ENCODE measurements at regions of chr9 and their contacts with region 1.

Region 1: DNA sequence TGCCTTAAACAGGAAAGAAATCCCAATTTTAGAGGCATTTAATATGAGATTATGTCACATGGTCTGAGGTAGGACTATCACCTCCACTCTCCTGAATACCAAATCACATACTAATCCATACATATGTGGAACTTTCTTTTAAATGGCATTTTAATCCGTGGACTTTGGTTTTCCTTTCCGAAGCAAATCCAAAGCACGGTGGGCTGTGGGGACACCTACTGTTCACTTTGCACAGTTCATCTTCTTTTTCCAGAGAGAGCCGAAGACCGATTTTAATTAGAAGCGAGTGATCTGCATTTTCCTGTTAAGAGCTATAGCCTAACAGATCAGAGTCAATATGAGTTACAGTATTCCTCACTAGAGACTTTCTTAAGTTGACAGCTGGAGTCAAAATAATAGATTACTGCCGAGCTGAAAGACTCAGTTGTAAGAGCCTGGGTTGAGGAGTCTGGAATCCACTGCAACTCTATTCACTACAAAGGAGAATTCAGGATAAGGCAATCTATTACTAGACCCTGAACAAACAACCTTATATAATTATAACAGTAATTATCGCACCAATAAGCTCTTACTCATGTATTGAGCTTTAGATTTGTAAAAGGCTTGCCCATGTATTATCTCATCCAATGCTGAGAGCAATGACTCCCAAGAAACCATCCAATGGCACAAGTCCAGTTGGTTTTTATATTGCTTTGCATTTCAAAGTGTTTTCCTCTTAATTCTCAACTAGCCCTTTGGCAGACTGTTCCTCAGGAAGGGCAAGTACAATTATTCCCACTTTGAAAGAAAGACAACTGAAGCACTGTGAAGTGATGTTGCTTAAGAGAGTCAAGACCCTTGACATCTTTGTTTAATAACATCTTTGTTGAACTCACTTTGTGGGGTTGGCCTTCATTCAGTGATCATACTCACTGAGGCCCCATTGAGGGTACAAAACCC is 144.7 kb downstream of the TRPM6 start:
- DNase-seq: peak; percentile 17
- H3K4me3 ChIP-seq: no peak overlapping the region
- H3K27ac ChIP-seq: no peak overlapping the region
- H3K4me1 ChIP-seq: no peaks in the 10 kb centered on the region
- H3K27me3 ChIP-seq: peaks cover 2% of the 10 kb centered on the region
- CTCF ChIP-seq: peak; percentile 71 to 84

Region 2: GRCh38 chr9:74309654-74310053 is 433.4 kb before region 1 on chr9:
- CTCF ChIA-PET with region 1: no interaction called
- dilution Hi-C with region 1: no loop called
- in situ Hi-C with region 1: no loop called
- intact Hi-C with region 1: loop called (anchors 2 kb)
- DNase-seq: no peak
- H3K4me3 ChIP-seq: no peak overlapping the region
- H3K27ac ChIP-seq: no peak overlapping the region
- H3K4me1 ChIP-seq: no peaks in the 10 kb centered on the region
- H3K27me3 ChIP-seq: no peaks in the 10 kb centered on the region
- CTCF ChIP-seq: peak in 1 of 2 donors; percentile 27

Region 3: DNA sequence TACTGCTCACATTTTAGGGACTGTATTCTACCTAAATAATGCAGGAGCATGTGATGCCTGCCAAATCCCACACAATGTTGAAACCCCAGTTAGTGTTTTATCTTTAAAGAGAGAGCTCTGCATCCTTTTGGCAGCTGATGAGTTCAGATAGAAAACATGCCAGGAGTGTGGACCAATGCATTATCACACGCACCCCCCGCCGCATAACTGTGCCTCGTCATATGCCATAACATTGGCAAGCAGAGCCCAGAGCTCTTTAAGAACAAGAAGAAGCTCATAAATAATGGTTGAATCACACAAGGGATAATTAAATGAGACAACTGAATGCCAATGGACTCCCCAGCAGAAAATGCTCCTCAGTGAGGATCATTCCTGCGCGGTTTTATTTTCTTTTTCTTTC is 298.7 kb before region 1 on chr9:
- CTCF ChIA-PET with region 1: no interaction called
- dilution Hi-C with region 1: no loop called
- in situ Hi-C with region 1: no loop called
- intact Hi-C with region 1: no loop called
- DNase-seq: no peak
- H3K4me3 ChIP-seq: no peak overlapping the region
- H3K27ac ChIP-seq: no peak overlapping the region
- H3K4me1 ChIP-seq: no peaks in the 10 kb centered on the region
- H3K27me3 ChIP-seq: no peaks in the 10 kb centered on the region
- CTCF ChIP-seq: no peak

Region 4: GRCh38 chr9:74577956-74578355 is 165.1 kb before region 1 on chr9:
- CTCF ChIA-PET with region 1: no interaction called
- dilution Hi-C with region 1: no loop called
- in situ Hi-C with region 1: loop called in 1 of 2 experiments (anchors 25 kb)
- intact Hi-C with region 1: loop called (anchors 1 kb)
- DNase-seq: no peak
- H3K4me3 ChIP-seq: no peak overlapping the region
- H3K27ac ChIP-seq: no peak overlapping the region
- H3K4me1 ChIP-seq: no peaks in the 10 kb centered on the region
- H3K27me3 ChIP-seq: no peaks in the 10 kb centered on the region
- CTCF ChIP-seq: peak; percentile 50 to 69

Region 5: DNA sequence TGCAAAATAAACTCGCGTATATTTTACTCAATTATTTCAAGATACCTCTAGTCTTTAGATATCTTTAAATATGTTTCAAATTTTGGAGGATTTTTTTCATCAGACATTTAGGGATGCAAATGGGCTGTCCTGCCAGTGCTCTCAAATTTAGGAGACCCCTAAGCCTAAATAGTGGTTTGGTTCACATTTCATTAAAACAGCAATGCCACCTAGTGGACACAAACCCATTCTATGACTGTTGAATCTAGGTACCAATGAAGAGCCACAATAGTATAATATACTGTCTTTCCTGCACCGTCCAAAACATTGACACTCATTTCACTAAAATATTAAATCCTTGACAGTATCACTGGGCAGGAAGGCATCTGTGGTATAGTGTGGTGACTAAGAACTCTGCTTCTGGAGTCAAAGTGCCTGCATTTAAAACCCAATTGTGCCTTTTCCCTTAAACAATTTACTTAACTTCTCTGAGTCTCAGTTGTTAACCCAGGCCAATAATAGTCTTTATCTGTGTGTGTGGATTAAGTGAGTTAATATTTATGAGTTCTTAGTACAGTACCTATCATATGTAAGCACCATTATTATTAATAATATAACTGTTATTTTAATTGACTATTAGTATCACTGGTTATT is 97.9 kb before region 1 on chr9:
- CTCF ChIA-PET with region 1: no interaction called
- dilution Hi-C with region 1: no loop called
- in situ Hi-C with region 1: no loop called
- intact Hi-C with region 1: loop called (anchors 10 kb)
- DNase-seq: peak; percentile 5
- H3K4me3 ChIP-seq: no peak overlapping the region
- H3K27ac ChIP-seq: no peak overlapping the region
- H3K4me1 ChIP-seq: no peaks in the 10 kb centered on the region
- H3K27me3 ChIP-seq: no peaks in the 10 kb centered on the region
- CTCF ChIP-seq: peak; percentile 51 to 67

Region 6: GRCh38 chr9:74838351-74838750 is 95.3 kb after region 1 on chr9:
- CTCF ChIA-PET with region 1: no interaction called
- dilution Hi-C with region 1: no loop called
- in situ Hi-C with region 1: no loop called
- intact Hi-C with region 1: no loop called
- DNase-seq: peak; percentile 29
- H3K4me3 ChIP-seq: no peak overlapping the region
- H3K27ac ChIP-seq: no peak overlapping the region
- H3K4me1 ChIP-seq: no peaks in the 10 kb centered on the region
- H3K27me3 ChIP-seq: no peaks in the 10 kb centered on the region
- CTCF ChIP-seq: no peak